ENCODE measurements at regions of chr5 and their contacts with region 1.

Region 1: DNA sequence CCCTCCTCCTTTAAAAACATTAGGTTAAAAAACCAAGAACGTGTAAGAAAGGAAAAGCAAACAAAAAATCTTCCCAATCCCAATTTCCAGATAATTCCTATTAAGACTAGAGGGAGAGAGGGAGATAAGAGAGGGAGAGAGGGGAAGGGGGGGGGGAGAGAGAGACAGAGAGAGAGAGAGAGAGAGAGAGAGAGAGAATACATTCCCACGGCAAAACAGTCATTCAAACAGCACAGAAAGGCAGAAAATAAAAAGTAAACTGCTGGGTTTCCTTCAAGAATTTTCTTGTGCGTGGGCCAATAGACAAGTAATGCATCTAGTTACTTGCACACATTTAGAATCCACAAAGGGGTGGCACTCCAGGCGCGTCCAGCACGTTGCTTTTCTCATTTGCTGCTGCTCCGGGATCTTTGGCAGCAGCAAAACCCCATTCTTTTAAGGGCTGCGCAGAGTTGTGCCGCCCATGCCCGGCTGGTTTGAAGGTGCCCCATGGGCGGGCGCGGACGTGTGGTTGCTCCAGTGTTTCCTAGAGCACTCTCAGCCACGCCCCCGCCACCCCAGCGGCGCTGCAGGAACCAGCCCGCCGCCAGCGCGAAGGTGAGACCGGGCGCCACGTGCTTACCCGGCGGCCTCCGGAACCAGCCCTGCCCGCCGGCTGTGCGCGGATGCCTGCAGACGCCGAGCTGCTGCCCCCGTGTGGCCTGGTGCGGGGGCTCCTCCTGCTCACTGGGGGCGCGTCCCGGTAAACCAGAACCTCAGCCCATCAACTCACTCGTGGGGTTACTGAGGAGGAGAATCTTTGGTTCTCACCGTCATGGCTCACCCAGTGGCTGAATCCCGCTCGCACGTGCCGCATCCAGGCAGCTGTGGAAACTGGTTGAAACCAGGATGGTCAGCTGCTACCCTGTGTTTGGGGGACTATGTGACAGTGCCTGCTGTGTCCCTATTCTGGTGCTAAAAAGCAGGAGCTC is 44.6 kb downstream of the STC2 start:
- DNase-seq: peak; percentile 92
- ATAC-seq: peak; percentile 88

Region 2: DNA sequence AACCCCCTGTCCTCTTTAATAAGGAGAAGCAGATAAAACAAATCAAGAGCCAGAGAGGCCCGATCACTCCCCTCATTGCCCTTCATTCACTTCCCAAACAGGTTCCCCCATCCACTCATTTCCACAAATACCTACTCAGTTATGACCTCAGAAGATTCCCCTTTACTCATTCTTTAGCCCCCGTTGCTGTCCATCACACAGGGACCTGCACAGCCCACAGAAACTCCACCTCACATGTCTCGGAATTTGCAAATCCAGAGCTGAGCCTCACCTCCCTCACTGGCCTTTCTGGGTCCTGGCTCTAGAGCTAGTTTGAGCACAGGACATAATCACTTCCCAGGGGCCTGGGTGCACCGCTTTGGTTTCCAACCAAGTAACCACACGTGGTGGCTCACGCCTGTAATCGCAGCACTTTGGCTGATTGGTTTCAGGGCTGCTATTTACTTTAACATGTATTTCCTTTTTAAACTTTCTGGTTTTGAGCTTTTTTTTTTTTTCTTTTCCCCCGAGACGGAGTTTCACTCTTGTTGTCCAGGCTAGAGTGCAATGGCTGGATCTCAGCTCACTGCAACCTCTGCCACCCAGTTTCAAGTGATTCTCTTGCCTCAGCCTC is 282.3 kb before region 1 on chr5:
- intact Hi-C with region 1: loop called (anchors 10 kb)
- DNase-seq: no peak
- ATAC-seq: no peak

Region 3: DNA sequence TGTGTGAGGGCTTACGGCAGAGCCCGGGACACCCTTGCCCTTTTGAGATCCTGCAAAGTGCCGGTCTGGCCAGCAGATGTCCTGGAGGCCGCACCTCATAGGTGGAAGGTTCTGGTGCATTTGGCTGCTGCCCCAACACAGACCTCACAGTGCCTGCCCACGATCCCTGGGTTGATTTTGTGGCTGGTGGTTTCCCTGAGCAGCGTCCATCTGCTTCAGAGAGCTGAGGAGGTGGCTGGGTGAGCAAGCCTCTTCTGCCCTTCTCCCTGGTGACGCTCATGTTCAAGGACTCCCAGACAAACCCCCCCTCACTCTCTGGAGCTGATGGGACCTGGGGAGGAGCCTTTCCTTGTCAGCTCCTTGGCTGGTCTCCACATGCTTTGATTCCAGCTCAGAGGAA is 120.4 kb before region 1 on chr5:
- intact Hi-C with region 1: loop called (anchors 10 kb)
- DNase-seq: peak; percentile 59
- ATAC-seq: peak; percentile 61

Measured in left ventricle myocardium superior (tissue), 1 donor.